ENCODE measurements at regions of chr2 and their contacts with region 1.

Region 1: GRCh38 chr2:197499594-197500526 is at the starts of genes HSPD1 and HSPE1:
- DNase-seq: peak; percentile 97 to 98
- H3K4me3 ChIP-seq: peak within 1 kb of the TSS; percentile 99
- H3K27ac ChIP-seq: peak within 1 kb of the TSS; percentile 74
- H3K4me1 ChIP-seq: peaks cover 43% of the 10 kb centered on the region
- H3K27me3 ChIP-seq: no peaks in the 10 kb centered on the region
- CTCF ChIP-seq: no peak
- total RNA-seq, gene HSPD1: 532 and 557 TPM in 2 replicates
- total RNA-seq, gene HSPE1: 113 and 219 TPM in 2 replicates

Region 2: GRCh38 chr2:197434541-197435513 is 65.0 kb before region 1 on chr2 and contains the start of gene SF3B1:
- CTCF ChIA-PET with region 1: no interaction called
- POLR2A ChIA-PET with region 1: interaction called, 4 read pairs
- intact Hi-C with region 1: loop called (anchors 1 kb)
- DNase-seq: peak; percentile 93 to 97
- H3K4me3 ChIP-seq: peak within 1 kb of the TSS; percentile 77
- H3K27ac ChIP-seq: peak within 1 kb of the TSS; percentile 80
- H3K4me1 ChIP-seq: peaks cover 24% of the 10 kb centered on the region
- H3K27me3 ChIP-seq: no peaks in the 10 kb centered on the region
- CTCF ChIP-seq: no peak
- total RNA-seq, gene SF3B1: 127 and 156 TPM in 2 replicates

Region 3: GRCh38 chr2:197461057-197461456 is 38.8 kb before region 1 on chr2:
- CTCF ChIA-PET with region 1: no interaction called
- POLR2A ChIA-PET with region 1: interaction called, 21 read pairs
- intact Hi-C with region 1: no loop called
- DNase-seq: peak; percentile 9 to 69
- H3K4me3 ChIP-seq: no peak overlapping the region
- H3K27ac ChIP-seq: peak overlapping the region; percentile 45; the same call in 1 of the 2 replicates
- H3K4me1 ChIP-seq: peaks cover 13% of the 10 kb centered on the region
- H3K27me3 ChIP-seq: no peaks in the 10 kb centered on the region
- CTCF ChIP-seq: no peak

Region 4: GRCh38 chr2:197515739-197516392 is 16.0 kb after region 1 on chr2 and contains the start of gene MOB4:
- CTCF ChIA-PET with region 1: interaction called, 7 read pairs
- POLR2A ChIA-PET with region 1: interaction called, 10 read pairs
- intact Hi-C with region 1: loop called (anchors 1 kb)
- DNase-seq: peak; percentile 80 to 95
- H3K4me3 ChIP-seq: peak within 1 kb of the TSS; percentile 95
- H3K27ac ChIP-seq: peak within 1 kb of the TSS; percentile 50
- H3K4me1 ChIP-seq: peaks cover 24% of the 10 kb centered on the region
- H3K27me3 ChIP-seq: no peaks in the 10 kb centered on the region
- CTCF ChIP-seq: no peak
- total RNA-seq, gene MOB4: 19.9 and 20.1 TPM in 2 replicates

Region 5: GRCh38 chr2:197717858-197718257 is 218.0 kb after region 1 on chr2:
- CTCF ChIA-PET with region 1: no interaction called
- POLR2A ChIA-PET with region 1: no interaction called
- intact Hi-C with region 1: no loop called
- DNase-seq: no peak
- H3K4me3 ChIP-seq: no peak overlapping the region
- H3K27ac ChIP-seq: no peak overlapping the region
- H3K4me1 ChIP-seq: no peaks in the 10 kb centered on the region
- H3K27me3 ChIP-seq: no peaks in the 10 kb centered on the region
- CTCF ChIP-seq: no peak